ENCODE measurements at regions of chr22 and their contacts with region 1.

Region 1: DNA sequence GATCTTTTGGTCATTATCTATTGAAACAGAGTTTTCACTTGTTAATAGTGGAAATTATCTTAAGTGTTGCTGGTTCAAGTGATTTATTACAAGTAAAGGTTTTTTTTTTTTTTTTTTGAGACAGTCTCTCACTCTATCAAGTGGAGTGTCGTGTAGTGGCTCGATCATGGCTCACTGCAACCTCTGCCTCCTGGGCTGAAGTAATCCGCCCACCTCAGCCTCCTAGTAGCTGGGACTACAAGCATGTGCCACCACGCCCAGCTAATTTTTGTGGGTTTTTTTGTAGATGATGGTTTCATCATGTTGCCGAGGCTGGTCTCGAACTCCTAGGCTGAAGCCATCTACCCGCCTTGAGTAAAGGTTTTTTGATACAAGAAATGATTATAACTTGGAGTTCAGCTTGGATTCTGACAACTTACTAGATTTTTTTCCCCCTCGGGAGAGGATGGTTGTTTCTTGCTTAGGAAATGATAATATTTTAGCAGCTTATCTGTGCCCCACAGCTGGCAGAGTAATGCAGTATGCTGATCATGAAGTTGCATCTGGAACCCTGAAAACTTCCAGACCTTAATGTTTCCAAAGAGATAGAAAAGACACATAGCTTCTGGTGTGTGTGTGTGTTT is 68.9 kb downstream of the MTMR3 start:
- DNase-seq: no peak
- H3K4me3 ChIP-seq: no peak overlapping the region
- H3K27ac ChIP-seq: no peak overlapping the region
- H3K4me1 ChIP-seq: peaks cover 0 to 69% (median 57%) of the 10 kb centered on the region in 4 donors
- H3K27me3 ChIP-seq: no peaks in the 10 kb centered on the region
- CTCF ChIP-seq: no peak
- EP300 ChIP-seq: no peak
- POLR2A ChIP-seq: no peak

Region 2: GRCh38 chr22:29704528-29705285 is 247.2 kb before region 1 on chr22:
- intact Hi-C with region 1: no loop called
- DNase-seq: peak; percentile 67
- H3K4me3 ChIP-seq: no peak overlapping the region
- H3K27ac ChIP-seq: peak overlapping the region; percentile 20 to 47 (median 39)
- H3K4me1 ChIP-seq: peaks cover 0 to 31% (median 21%) of the 10 kb centered on the region in 4 donors
- H3K27me3 ChIP-seq: peaks cover 0 to 37% (median 0%) of the 10 kb centered on the region in 3 donors
- CTCF ChIP-seq: no peak
- EP300 ChIP-seq: no peak
- POLR2A ChIP-seq: no peak

Region 3: DNA sequence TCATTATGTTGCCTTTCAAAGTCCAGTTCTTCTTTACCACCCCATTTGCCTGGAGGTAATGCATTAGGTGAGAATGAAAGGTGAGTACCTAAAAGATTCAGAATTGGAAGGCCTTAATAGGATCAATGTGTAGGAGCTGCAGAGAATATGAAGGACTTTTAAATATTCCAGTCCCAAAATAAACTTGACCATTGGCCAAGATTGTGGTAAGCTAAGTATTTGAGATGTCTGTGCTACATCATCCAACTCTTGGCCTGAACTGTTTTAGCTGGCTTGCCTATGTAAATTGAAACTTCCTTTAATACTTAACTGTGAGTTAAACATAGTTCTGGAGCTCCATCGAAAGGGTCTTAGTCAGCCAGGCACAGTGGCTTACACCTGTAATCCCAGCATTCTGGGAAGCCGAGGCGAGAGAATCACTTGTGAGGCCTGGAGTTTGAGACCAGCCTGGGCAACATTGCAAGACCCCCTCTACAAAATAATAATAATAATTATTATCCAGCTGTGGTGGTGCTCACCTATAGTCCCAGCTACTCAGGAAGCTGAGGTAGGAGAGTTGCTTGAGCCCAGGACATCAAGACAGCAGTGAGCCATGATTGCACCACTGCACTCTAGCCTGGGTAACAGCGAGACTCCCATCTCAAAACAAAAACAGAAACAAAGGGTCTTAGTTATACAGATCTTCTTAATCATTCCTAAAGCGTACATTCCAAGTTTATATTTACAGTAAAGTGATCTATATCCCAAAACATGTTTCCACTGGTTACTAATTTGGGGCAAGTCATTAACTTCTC is 39.1 kb before region 1 on chr22:
- intact Hi-C with region 1: loop called (anchors 5 kb)
- DNase-seq: no peak
- H3K4me3 ChIP-seq: no peak overlapping the region
- H3K27ac ChIP-seq: peak overlapping the region; percentile 41 to 80 (median 55)
- H3K4me1 ChIP-seq: peaks cover 0 to 89% (median 77%) of the 10 kb centered on the region in 4 donors
- H3K27me3 ChIP-seq: no peaks in the 10 kb centered on the region
- CTCF ChIP-seq: no peak
- EP300 ChIP-seq: no peak
- POLR2A ChIP-seq: no peak

Region 4: GRCh38 chr22:29994027-29994715 is 42.3 kb after region 1 on chr22:
- intact Hi-C with region 1: no loop called
- DNase-seq: no peak
- H3K4me3 ChIP-seq: no peak overlapping the region
- H3K27ac ChIP-seq: no peak overlapping the region
- H3K4me1 ChIP-seq: peaks cover 0 to 22% (median 4%) of the 10 kb centered on the region in 4 donors
- H3K27me3 ChIP-seq: no peaks in the 10 kb centered on the region
- CTCF ChIP-seq: no peak
- EP300 ChIP-seq: no peak
- POLR2A ChIP-seq: no peak

Region 5: DNA sequence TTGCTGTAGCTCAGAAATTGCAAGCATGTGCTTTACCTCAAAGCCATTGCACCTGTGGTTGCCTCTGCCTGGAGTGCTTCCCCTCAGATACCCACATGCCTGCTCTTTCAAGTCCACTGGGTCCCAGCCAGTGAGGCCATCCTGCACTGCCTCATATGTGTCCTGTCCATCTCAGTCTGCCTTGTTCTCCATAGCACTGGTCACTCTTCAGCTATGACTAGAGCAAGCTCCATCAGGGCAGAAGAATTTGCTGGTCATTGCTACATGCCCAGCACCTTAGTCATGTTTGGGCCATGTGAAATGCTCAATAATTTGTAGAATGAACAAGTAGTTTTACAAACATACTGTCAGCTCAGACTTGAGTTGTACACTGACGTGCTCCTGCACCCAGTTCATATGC is 63.9 kb after region 1 on chr22:
- intact Hi-C with region 1: no loop called
- DNase-seq: no peak
- H3K4me3 ChIP-seq: no peak overlapping the region
- H3K27ac ChIP-seq: no peak overlapping the region
- H3K4me1 ChIP-seq: peaks cover 0 to 7% (median 0%) of the 10 kb centered on the region in 4 donors
- H3K27me3 ChIP-seq: no peaks in the 10 kb centered on the region
- CTCF ChIP-seq: no peak
- EP300 ChIP-seq: no peak
- POLR2A ChIP-seq: no peak

Region 6: GRCh38 chr22:31646186-31647089 is 1694.5 kb after region 1 on chr22:
- intact Hi-C with region 1: no loop called
- DNase-seq: no peak
- H3K4me3 ChIP-seq: no peak overlapping the region
- H3K27ac ChIP-seq: peak overlapping the region in 2 of 4 donors; percentile 35 to 37
- H3K4me1 ChIP-seq: peaks cover 0 to 20% (median 5%) of the 10 kb centered on the region in 4 donors
- H3K27me3 ChIP-seq: no peaks in the 10 kb centered on the region
- CTCF ChIP-seq: no peak
- EP300 ChIP-seq: no peak
- POLR2A ChIP-seq: no peak

Measured in sigmoid colon (tissue), 7 donors.